ENCODE measurements at regions of chr6 and their contacts with region 1.

Region 1: GRCh38 chr6:87929843-87930288 is 117.8 kb upstream of the SPACA1 start:
- DNase-seq: peak; percentile 79
- H3K4me3 ChIP-seq: no peak overlapping the region
- H3K27ac ChIP-seq: no peak overlapping the region
- H3K4me1 ChIP-seq: no peaks in the 10 kb centered on the region
- H3K27me3 ChIP-seq: no peaks in the 10 kb centered on the region
- CTCF ChIP-seq: peak in 3 of 4 experiments; percentile 82 to 87 (median 86)
- POLR2A ChIP-seq: no peak

Region 2: GRCh38 chr6:87393022-87393622 is 536.7 kb before region 1 on chr6:
- intact Hi-C with region 1: loop called (anchors 10 kb)
- DNase-seq: peak; percentile 61
- H3K4me3 ChIP-seq: no peak overlapping the region
- H3K27ac ChIP-seq: no peak overlapping the region
- H3K4me1 ChIP-seq: no peaks in the 10 kb centered on the region
- H3K27me3 ChIP-seq: no peaks in the 10 kb centered on the region
- CTCF ChIP-seq: peak; percentile 29 to 89 (median 82)
- POLR2A ChIP-seq: no peak

Region 3: GRCh38 chr6:87993356-87993755 is 63.5 kb after region 1 on chr6:
- intact Hi-C with region 1: no loop called
- DNase-seq: no peak
- H3K4me3 ChIP-seq: no peak overlapping the region
- H3K27ac ChIP-seq: no peak overlapping the region
- H3K4me1 ChIP-seq: no peaks in the 10 kb centered on the region
- H3K27me3 ChIP-seq: no peaks in the 10 kb centered on the region
- CTCF ChIP-seq: no peak
- POLR2A ChIP-seq: no peak

Region 4: DNA sequence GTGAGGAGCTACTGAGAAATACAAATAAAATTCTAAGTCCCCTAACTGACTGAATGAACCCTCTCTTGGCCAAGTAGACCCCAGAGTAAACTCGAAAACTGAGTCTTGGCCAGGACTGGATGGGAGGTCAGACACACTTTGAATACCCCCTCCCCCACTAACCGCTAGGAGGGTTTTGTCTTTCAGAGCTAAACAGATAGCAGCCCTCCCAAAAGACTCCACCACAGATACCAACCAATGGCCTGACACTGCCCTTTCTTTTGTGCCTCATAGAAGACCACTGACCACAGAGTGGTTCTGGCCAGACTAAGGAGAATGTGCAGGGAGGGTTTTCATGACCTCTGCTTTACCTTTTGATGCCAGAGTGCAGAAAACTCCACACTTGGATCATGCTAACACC is 159.8 kb after region 1 on chr6:
- intact Hi-C with region 1: no loop called
- DNase-seq: no peak
- H3K4me3 ChIP-seq: no peak overlapping the region
- H3K27ac ChIP-seq: no peak overlapping the region
- H3K4me1 ChIP-seq: no peaks in the 10 kb centered on the region
- H3K27me3 ChIP-seq: no peaks in the 10 kb centered on the region
- CTCF ChIP-seq: no peak
- POLR2A ChIP-seq: no peak

Region 5: DNA sequence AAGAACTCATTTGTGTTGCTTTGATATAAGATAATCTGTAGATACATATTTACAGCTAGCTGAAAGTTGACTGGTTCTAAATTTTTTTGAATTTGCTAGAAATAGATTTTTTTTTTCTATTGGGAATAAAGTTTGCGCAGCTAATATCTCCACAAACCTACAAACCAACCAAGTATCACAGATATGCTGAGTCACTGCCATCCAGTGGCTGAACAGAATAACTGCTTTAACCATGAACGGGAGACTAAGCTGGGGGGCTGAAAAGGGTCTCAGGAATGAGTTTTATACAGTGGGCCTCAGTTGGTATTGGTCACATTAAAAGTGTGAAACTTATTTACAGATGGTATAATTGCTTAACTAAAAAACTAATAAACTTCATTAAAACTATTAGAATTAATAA is 563.0 kb after region 1 on chr6:
- intact Hi-C with region 1: loop called (anchors 10 kb)
- DNase-seq: no peak
- H3K4me3 ChIP-seq: no peak overlapping the region
- H3K27ac ChIP-seq: no peak overlapping the region
- H3K4me1 ChIP-seq: no peaks in the 10 kb centered on the region
- H3K27me3 ChIP-seq: no peaks in the 10 kb centered on the region
- CTCF ChIP-seq: peak in 2 of 4 experiments; percentile 14 to 26
- POLR2A ChIP-seq: no peak

Region 6: DNA sequence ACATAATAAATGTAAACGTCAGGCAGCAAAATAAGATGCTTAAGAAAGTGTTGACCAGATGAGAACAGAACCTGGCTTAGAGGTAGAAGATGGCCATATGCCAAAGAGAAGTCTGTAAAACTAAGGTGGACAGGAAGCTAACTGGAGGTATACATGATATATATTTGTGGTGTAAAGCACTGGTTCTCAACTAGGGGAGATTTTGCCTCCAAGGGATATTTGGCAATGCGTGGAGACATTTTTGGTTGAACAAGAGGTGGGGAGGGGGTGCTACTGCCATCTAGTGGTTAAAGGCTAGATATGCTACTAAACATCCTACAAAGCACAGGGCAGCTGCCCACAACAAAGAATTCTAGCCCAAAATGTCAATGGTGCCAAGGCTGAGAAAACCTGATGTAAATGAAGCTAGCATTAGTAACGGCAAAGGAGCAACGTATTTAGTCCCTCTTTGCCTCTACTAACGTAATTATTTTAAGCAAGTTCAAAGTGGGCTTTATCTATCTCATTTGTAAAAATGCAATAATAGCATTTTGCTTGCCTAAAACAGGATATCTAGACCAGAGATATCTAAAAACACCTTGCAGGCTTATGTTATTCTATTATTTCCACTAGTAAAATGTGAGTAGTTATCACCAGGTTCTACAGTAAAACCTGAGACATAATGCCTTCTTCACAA is 851.0 kb after region 1 on chr6:
- intact Hi-C with region 1: loop called (anchors 5 kb)
- DNase-seq: peak; percentile 5
- H3K4me3 ChIP-seq: no peak overlapping the region
- H3K27ac ChIP-seq: no peak overlapping the region
- H3K4me1 ChIP-seq: no peaks in the 10 kb centered on the region
- H3K27me3 ChIP-seq: no peaks in the 10 kb centered on the region
- CTCF ChIP-seq: peak; percentile 36 to 66 (median 52)
- POLR2A ChIP-seq: no peak

Region 7: DNA sequence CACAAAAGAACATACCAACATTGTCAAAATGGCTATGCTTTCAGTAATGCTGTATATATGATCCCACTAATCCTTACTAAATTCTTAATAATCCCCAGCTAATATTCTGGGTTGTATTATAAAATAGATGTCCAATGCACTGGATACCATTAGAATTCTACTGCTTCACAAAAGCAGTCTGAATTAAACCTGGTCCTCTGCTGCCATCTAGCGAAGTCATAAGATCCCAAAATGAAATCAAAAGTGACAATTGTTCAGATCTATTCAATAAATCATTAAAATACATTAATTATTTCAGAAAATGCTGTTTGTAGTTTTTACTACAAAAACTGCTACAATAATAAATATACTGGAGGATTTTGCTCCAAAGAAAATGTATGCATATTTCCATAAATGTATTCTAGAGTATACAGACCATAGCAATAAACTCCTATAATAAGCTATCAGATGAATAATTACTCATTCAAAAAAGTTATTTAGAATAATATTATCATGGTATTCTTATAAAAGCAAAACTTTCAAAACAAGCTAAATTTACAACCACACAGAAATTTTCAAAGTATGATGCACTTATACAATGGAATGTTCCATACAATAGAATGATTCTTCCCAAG is 941.0 kb after region 1 on chr6:
- intact Hi-C with region 1: loop called (anchors 5 kb)
- DNase-seq: peak; percentile 28
- H3K4me3 ChIP-seq: no peak overlapping the region
- H3K27ac ChIP-seq: no peak overlapping the region
- H3K4me1 ChIP-seq: no peaks in the 10 kb centered on the region
- H3K27me3 ChIP-seq: no peaks in the 10 kb centered on the region
- CTCF ChIP-seq: peak in 3 of 4 experiments; percentile 53 to 77 (median 66)
- POLR2A ChIP-seq: no peak